Naive thymus-derived CD4-positive, alpha-beta T cell (primary cell): ENCODE measurements at regions of chr3 and their contacts with region 1.

Region 1: GRCh38 chr3:45043728-45044299 is 17.7 kb downstream of the CLEC3B start:
- DNase-seq: no peak
- ATAC-seq: no peak
- H3K4me3 ChIP-seq: no peak overlapping the region
- H3K4me3 Mint-ChIP-seq: no peak overlapping the region
- H3K27ac ChIP-seq: no peak overlapping the region
- H3K27ac Mint-ChIP-seq: no peak overlapping the region
- H3K4me1 ChIP-seq: peaks cover 0 to 15% of the 10 kb centered on the region in 2 donors
- H3K4me1 Mint-ChIP-seq: peaks cover 2 to 24% (median 23%) of the 10 kb centered on the region in 7 donors
- H3K27me3 ChIP-seq: no peaks in the 10 kb centered on the region
- H3K27me3 Mint-ChIP-seq: peaks cover 4 to 36% (median 11%) of the 10 kb centered on the region in 5 donors

Region 2: DNA sequence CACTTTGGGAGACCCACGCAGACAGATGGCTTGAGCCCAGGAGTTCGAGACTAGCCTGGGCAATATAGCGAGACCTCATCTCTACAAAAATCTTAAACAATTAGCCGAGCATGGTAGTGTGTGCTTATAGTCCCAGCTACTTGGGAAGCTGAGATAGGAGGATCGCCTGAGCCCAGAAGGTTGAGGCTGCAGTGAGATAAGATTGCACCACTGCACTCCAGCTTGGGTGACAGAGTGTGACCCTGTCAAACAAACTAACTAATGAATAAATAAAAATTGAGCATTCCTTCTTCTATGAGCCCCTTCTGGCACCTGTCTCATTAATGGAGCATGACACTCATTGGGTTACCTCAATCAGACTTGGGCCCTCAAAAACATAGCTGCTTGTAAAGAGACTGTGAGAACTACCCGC is 75.4 kb before region 1 on chr3:
- CTCF ChIA-PET with region 1: no interaction called
- POLR2A ChIA-PET with region 1: no interaction called
- intact Hi-C with region 1: no loop called
- DNase-seq: no peak
- ATAC-seq: no peak
- H3K4me3 ChIP-seq: no peak overlapping the region
- H3K4me3 Mint-ChIP-seq: peak overlapping the region in 5 of 10 donors; percentile 39 to 72 (median 61)
- H3K27ac ChIP-seq: no peak overlapping the region
- H3K27ac Mint-ChIP-seq: peak overlapping the region in 4 of 9 donors; percentile 28 to 77 (median 58)
- H3K4me1 ChIP-seq: peaks cover 30 to 31% of the 10 kb centered on the region in 2 donors
- H3K4me1 Mint-ChIP-seq: peaks cover 52 to 93% (median 87%) of the 10 kb centered on the region in 7 donors
- H3K27me3 ChIP-seq: no peaks in the 10 kb centered on the region
- H3K27me3 Mint-ChIP-seq: no peaks in the 10 kb centered on the region

Region 3: GRCh38 chr3:45011756-45012508 is 31.9 kb before region 1 on chr3:
- CTCF ChIA-PET with region 1: no interaction called
- POLR2A ChIA-PET with region 1: no interaction called
- intact Hi-C with region 1: no loop called
- DNase-seq: no peak
- ATAC-seq: no peak
- H3K4me3 ChIP-seq: no peak overlapping the region
- H3K4me3 Mint-ChIP-seq: peak overlapping the region in 3 of 10 donors; percentile 11 to 44 (median 29)
- H3K27ac ChIP-seq: no peak overlapping the region
- H3K27ac Mint-ChIP-seq: peak overlapping the region in 6 of 9 donors; percentile 21 to 83 (median 70)
- H3K4me1 ChIP-seq: peaks cover 0 to 10% of the 10 kb centered on the region in 2 donors
- H3K4me1 Mint-ChIP-seq: peaks cover 15 to 49% (median 28%) of the 10 kb centered on the region in 7 donors
- H3K27me3 ChIP-seq: no peaks in the 10 kb centered on the region
- H3K27me3 Mint-ChIP-seq: no peaks in the 10 kb centered on the region

Region 4: DNA sequence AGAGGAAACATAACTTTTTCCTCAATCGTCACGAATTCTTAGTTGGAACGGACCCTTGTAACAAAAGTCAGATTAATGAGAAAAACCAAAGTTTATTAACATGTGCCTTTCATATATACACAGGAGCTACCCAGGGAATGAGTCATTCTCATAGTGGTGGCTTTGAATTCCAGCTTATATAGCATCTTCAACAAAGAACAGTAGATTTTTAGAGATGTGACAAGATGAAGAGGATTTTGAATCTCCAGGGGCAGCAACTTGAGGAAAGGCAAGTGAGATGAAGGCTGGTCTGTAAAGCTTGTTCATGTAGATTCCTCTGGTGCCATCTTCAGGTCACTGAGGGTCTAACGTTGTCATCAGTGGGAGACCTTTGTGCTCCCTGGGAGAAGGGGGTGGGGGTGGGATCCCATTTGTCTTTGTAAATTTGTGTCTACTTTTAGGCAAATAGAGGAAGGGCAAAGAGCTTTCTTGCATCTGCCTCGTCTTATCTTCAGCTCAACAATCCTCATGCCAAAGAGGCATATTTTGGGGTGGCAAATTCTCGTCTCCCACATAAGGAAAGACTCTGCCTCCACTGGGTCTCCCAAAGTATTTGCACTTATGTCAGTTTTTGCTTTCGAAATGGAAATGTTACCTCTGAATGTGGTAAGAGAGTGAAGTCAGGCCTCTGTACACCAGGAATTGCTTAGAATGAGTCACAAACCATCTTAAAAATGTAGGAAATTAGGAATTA is 11.8 kb after region 1 on chr3:
- CTCF ChIA-PET with region 1: interaction called, 11 read pairs
- POLR2A ChIA-PET with region 1: no interaction called
- intact Hi-C with region 1: loop called in 1 of 2 experiments (anchors 2 kb)
- DNase-seq: peak in 1 of 9 donors; percentile 20
- ATAC-seq: peak; percentile 38
- H3K4me3 ChIP-seq: no peak overlapping the region
- H3K4me3 Mint-ChIP-seq: no peak overlapping the region
- H3K27ac ChIP-seq: no peak overlapping the region
- H3K27ac Mint-ChIP-seq: no peak overlapping the region
- H3K4me1 ChIP-seq: no peaks in the 10 kb centered on the region
- H3K4me1 Mint-ChIP-seq: peaks cover 0 to 30% (median 0%) of the 10 kb centered on the region in 7 donors
- H3K27me3 ChIP-seq: no peaks in the 10 kb centered on the region
- H3K27me3 Mint-ChIP-seq: peaks cover 0 to 9% (median 0%) of the 10 kb centered on the region in 5 donors

Region 5: GRCh38 chr3:45119824-45120614 is 76.2 kb after region 1 on chr3:
- CTCF ChIA-PET with region 1: interaction called, 5 read pairs
- POLR2A ChIA-PET with region 1: interaction called, 5 read pairs
- intact Hi-C with region 1: loop called in 1 of 2 experiments (anchors 2 kb)
- DNase-seq: no peak
- ATAC-seq: no peak
- H3K4me3 ChIP-seq: no peak overlapping the region
- H3K4me3 Mint-ChIP-seq: no peak overlapping the region
- H3K27ac ChIP-seq: no peak overlapping the region
- H3K27ac Mint-ChIP-seq: peak overlapping the region in 1 of 9 donors; percentile 23
- H3K4me1 ChIP-seq: peaks cover 17 to 22% of the 10 kb centered on the region in 2 donors
- H3K4me1 Mint-ChIP-seq: peaks cover 16 to 62% (median 27%) of the 10 kb centered on the region in 7 donors
- H3K27me3 ChIP-seq: peaks cover 0 to 3% of the 10 kb centered on the region in 2 donors
- H3K27me3 Mint-ChIP-seq: peaks cover 0 to 43% (median 0%) of the 10 kb centered on the region in 5 donors

Region 6: GRCh38 chr3:45343947-45344346 is 300.1 kb after region 1 on chr3:
- CTCF ChIA-PET with region 1: no interaction called
- POLR2A ChIA-PET with region 1: no interaction called
- intact Hi-C with region 1: loop called in 1 of 2 experiments (anchors 5 kb)
- DNase-seq: no peak
- ATAC-seq: no peak
- H3K4me3 ChIP-seq: no peak overlapping the region
- H3K4me3 Mint-ChIP-seq: no peak overlapping the region
- H3K27ac ChIP-seq: no peak overlapping the region
- H3K27ac Mint-ChIP-seq: no peak overlapping the region
- H3K4me1 ChIP-seq: no peaks in the 10 kb centered on the region
- H3K4me1 Mint-ChIP-seq: no peaks in the 10 kb centered on the region
- H3K27me3 ChIP-seq: no peaks in the 10 kb centered on the region
- H3K27me3 Mint-ChIP-seq: peaks cover 0 to 13% (median 0%) of the 10 kb centered on the region in 5 donors